Naive thymus-derived CD4-positive, alpha-beta T cell (primary cell): ENCODE measurements at regions of chr2 and their contacts with region 1.

Region 1: DNA sequence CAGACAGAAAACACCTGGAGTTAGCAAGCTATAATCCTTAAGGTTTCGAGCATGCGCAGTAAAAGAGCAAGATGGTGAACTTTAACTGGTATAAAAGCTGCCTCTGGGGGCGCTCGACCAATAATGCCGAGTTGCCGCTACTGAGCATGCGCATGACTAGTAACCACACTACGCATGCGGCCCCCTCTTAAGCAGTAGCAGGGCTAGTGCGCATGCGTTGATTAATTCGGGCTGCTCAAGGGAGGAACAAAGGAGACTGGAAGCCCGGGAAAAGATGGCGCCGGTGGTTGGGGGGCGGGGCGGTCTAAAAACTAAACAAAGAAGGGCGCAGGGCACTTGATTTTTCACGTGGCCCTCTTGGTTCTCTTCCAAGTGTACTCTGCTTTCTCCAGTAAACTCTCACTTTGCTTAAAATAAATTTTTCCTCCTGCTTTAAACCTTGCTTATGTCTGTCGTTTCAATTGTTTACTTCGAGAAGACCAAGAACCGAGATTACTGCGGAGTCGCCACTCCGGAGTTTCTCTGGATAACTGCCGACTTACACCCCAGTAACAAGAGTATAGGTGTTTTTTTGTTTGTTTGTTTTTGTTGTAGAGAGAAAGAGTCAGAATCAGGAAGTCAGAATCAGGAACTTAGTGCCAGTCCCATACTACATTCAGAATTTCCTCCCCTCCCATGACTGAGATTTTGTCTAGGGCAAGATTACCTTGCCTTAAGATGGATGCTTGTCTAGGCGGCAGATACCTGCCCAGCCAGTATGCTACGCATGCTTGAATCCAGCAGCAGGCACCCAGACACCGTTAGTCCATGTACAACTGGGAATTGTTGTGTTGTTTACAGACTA is 5.8 kb downstream of the XRCC5 start:
- DNase-seq: peak; percentile 91 to 98 (median 96)
- ATAC-seq: peak; percentile 94
- H3K4me3 ChIP-seq: peak overlapping the region; percentile 65
- H3K4me3 Mint-ChIP-seq: peak overlapping the region; percentile 88 to 99 (median 94)
- H3K27ac ChIP-seq: peak overlapping the region; percentile 77
- H3K27ac Mint-ChIP-seq: peak overlapping the region; percentile 89 to 99 (median 97)
- H3K4me1 ChIP-seq: peaks cover 35 to 58% of the 10 kb centered on the region in 2 donors
- H3K4me1 Mint-ChIP-seq: peaks cover 51 to 100% (median 96%) of the 10 kb centered on the region in 7 donors
- H3K27me3 ChIP-seq: no peaks in the 10 kb centered on the region
- H3K27me3 Mint-ChIP-seq: peaks cover 0 to 2% (median 0%) of the 10 kb centered on the region in 5 donors

Region 2: DNA sequence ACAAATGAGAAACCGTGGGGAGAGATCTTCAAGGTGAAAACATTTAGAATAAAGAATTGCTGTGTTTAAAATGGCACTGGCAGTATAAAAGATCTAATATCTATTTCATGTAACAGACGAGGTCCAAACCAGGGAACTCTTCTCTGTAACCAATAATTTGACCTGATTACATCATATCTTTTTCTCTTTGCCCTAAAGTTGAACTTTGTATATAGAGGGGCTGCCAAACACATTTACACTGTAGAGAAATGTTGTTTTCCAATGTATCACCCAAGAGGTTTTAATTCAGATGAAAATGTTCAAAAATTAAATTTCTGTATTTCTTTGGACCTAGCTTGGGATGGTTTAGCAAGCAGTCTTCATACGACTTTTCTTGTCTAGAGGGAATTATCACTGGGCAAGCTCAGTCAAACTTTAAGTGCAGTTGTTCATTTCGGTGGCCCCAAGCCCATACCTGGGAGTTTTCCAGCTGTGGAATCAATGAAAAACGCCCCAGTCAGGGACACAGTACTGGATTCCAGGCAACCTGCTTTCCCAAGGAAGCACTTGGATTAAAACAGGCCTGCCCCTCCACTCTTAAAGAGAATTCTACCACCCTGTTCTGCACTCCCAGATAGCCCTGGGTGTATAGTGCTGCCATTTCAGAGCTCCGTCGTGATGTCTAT is 470.6 kb before region 1 on chr2:
- CTCF ChIA-PET with region 1: no interaction called
- POLR2A ChIA-PET with region 1: no interaction called
- intact Hi-C with region 1: no loop called
- DNase-seq: no peak
- ATAC-seq: no peak
- H3K4me3 ChIP-seq: no peak overlapping the region
- H3K4me3 Mint-ChIP-seq: no peak overlapping the region
- H3K27ac ChIP-seq: no peak overlapping the region
- H3K27ac Mint-ChIP-seq: no peak overlapping the region
- H3K4me1 ChIP-seq: no peaks in the 10 kb centered on the region
- H3K4me1 Mint-ChIP-seq: no peaks in the 10 kb centered on the region
- H3K27me3 ChIP-seq: no peaks in the 10 kb centered on the region
- H3K27me3 Mint-ChIP-seq: peaks cover 0 to 3% (median 0%) of the 10 kb centered on the region in 5 donors

Region 3: GRCh38 chr2:216057688-216058193 is 57.2 kb before region 1 on chr2:
- CTCF ChIA-PET with region 1: interaction called, 4 read pairs
- POLR2A ChIA-PET with region 1: interaction called, 34 read pairs
- intact Hi-C with region 1: loop called in 1 of 2 experiments (anchors 1 kb)
- DNase-seq: peak in 8 of 9 donors; percentile 48 to 76 (median 67)
- ATAC-seq: peak; percentile 96
- H3K4me3 ChIP-seq: peak overlapping the region; percentile 49
- H3K4me3 Mint-ChIP-seq: peak overlapping the region; percentile 63 to 87 (median 84)
- H3K27ac ChIP-seq: peak overlapping the region; percentile 83
- H3K27ac Mint-ChIP-seq: peak overlapping the region; percentile 94 to 100 (median 98)
- H3K4me1 ChIP-seq: peaks cover 16 to 22% of the 10 kb centered on the region in 2 donors
- H3K4me1 Mint-ChIP-seq: peaks cover 8 to 42% (median 37%) of the 10 kb centered on the region in 7 donors
- H3K27me3 ChIP-seq: no peaks in the 10 kb centered on the region
- H3K27me3 Mint-ChIP-seq: no peaks in the 10 kb centered on the region

Region 4: DNA sequence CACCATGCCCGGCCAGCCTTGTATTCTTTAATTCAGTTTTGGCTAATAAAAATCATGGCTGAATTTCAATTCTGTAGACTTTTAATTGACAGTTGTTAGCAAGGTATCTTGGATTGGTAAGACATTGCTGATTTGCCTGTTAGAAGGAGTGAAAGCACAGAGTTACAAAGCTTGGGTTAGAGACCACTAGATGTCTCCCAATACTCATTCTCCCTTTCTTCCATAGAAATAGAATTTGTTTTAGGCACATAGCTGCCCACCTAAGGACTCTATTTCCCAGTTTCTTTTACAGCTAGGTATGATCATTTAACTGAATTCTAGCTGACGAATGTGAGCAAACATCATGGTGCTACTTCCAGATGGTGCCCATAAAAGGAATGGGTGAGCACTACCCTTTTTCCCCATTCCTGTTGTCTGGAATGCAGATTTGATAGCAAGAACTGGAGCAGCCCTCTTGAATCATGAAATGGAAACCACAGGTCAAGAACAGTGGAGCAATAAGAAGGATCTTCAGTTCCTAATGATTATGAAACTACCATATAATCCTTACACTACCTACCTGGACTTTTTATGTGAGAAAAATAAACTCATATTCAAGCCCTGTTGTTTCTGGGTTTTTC is 50.8 kb before region 1 on chr2:
- CTCF ChIA-PET with region 1: interaction called, 4 read pairs
- POLR2A ChIA-PET with region 1: interaction called, 34 read pairs
- intact Hi-C with region 1: loop called in 1 of 2 experiments (anchors 1 kb)
- DNase-seq: no peak
- ATAC-seq: no peak
- H3K4me3 ChIP-seq: no peak overlapping the region
- H3K4me3 Mint-ChIP-seq: no peak overlapping the region
- H3K27ac ChIP-seq: no peak overlapping the region
- H3K27ac Mint-ChIP-seq: peak overlapping the region in 1 of 9 donors; percentile 41
- H3K4me1 ChIP-seq: peaks cover 0 to 4% of the 10 kb centered on the region in 2 donors
- H3K4me1 Mint-ChIP-seq: peaks cover 7 to 28% (median 24%) of the 10 kb centered on the region in 7 donors
- H3K27me3 ChIP-seq: no peaks in the 10 kb centered on the region
- H3K27me3 Mint-ChIP-seq: no peaks in the 10 kb centered on the region

Region 5: GRCh38 chr2:216081487-216082116 is 33.3 kb before region 1 on chr2 and contains the starts of genes PECR and TMEM169:
- CTCF ChIA-PET with region 1: interaction called, 14 read pairs
- POLR2A ChIA-PET with region 1: interaction called, 166 read pairs
- intact Hi-C with region 1: loop called in 1 of 2 experiments (anchors 1 kb)
- DNase-seq: peak; percentile 39 to 81 (median 62)
- ATAC-seq: peak; percentile 93
- H3K4me3 ChIP-seq: peak within 1 kb of the TSS; percentile 95
- H3K4me3 Mint-ChIP-seq: peak within 1 kb of the TSS; percentile 76 to 97 (median 94)
- H3K27ac ChIP-seq: peak within 1 kb of the TSS; percentile 77
- H3K27ac Mint-ChIP-seq: peak within 1 kb of the TSS; percentile 86 to 97 (median 95)
- H3K4me1 ChIP-seq: peaks cover 42 to 57% of the 10 kb centered on the region in 2 donors
- H3K4me1 Mint-ChIP-seq: peaks cover 47 to 76% (median 62%) of the 10 kb centered on the region in 7 donors
- H3K27me3 ChIP-seq: no peaks in the 10 kb centered on the region
- H3K27me3 Mint-ChIP-seq: no peaks in the 10 kb centered on the region
- total RNA-seq, gene PECR: 15.7 to 29.9 (median 20.6) TPM
- total RNA-seq, gene TMEM169: 2.0 to 5.1 (median 2.6) TPM

Region 6: GRCh38 chr2:216341121-216341520 is 226.2 kb after region 1 on chr2:
- CTCF ChIA-PET with region 1: no interaction called
- POLR2A ChIA-PET with region 1: no interaction called
- intact Hi-C with region 1: no loop called
- DNase-seq: no peak
- ATAC-seq: no peak
- H3K4me3 ChIP-seq: no peak overlapping the region
- H3K4me3 Mint-ChIP-seq: no peak overlapping the region
- H3K27ac ChIP-seq: no peak overlapping the region
- H3K27ac Mint-ChIP-seq: no peak overlapping the region
- H3K4me1 ChIP-seq: peaks cover 0 to 8% of the 10 kb centered on the region in 2 donors
- H3K4me1 Mint-ChIP-seq: peaks cover 0 to 54% (median 47%) of the 10 kb centered on the region in 7 donors
- H3K27me3 ChIP-seq: no peaks in the 10 kb centered on the region
- H3K27me3 Mint-ChIP-seq: peaks cover 0 to 19% (median 0%) of the 10 kb centered on the region in 5 donors